ENCODE measurements at regions of chr4 and their contacts with region 1.

Region 1: DNA sequence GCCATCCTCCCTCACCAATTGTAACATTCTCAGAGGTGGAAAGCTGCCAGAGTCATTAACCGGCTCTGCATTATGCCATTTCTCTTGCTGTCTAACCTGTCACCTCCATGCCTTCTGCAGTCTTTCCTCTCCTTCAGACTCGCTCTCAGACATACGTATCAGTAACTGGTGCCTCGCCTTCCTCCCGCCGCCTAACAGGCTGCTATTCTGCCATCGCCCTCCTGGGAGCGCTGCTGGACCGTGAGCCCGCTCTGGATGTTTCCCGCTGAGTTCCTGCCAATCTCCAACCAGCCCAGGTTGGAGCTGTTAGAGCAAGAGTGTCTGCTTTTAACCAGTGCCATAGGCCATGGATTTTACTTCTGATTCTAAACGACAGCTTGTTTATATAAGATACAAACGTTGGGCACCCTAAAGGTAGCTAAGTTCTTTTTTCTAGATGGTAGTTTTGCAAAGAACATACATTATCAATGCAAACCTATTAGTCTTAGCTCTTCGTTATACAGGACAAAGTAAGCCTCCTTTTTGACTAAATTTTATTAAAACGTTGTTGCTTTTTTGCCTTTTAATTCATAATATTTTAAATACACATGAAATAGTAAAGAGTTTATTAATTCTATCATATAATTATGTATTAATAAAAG is 59.5 kb upstream of the NEIL3 start:
- DNase-seq: peak; percentile 77
- H3K4me3 Mint-ChIP-seq: no peak overlapping the region
- H3K27ac Mint-ChIP-seq: no peak overlapping the region
- H3K4me1 Mint-ChIP-seq: peaks cover 9% of the 10 kb centered on the region
- H3K27me3 Mint-ChIP-seq: peaks cover 8% of the 10 kb centered on the region

Region 2: GRCh38 chr4:176377780-176378179 is 872.4 kb before region 1 on chr4:
- CTCF ChIA-PET with region 1: no interaction called
- intact Hi-C with region 1: loop called (anchors 5 kb)
- DNase-seq: no peak
- H3K4me3 Mint-ChIP-seq: no peak overlapping the region
- H3K27ac Mint-ChIP-seq: no peak overlapping the region
- H3K4me1 Mint-ChIP-seq: no peaks in the 10 kb centered on the region
- H3K27me3 Mint-ChIP-seq: peaks cover 3% of the 10 kb centered on the region

Region 3: GRCh38 chr4:177118596-177118995 is 131.6 kb before region 1 on chr4:
- CTCF ChIA-PET with region 1: no interaction called
- intact Hi-C with region 1: no loop called
- DNase-seq: no peak
- H3K4me3 Mint-ChIP-seq: no peak overlapping the region
- H3K27ac Mint-ChIP-seq: no peak overlapping the region
- H3K4me1 Mint-ChIP-seq: no peaks in the 10 kb centered on the region
- H3K27me3 Mint-ChIP-seq: peaks cover 5% of the 10 kb centered on the region

Region 4: GRCh38 chr4:177309522-177310371 is 59.6 kb after region 1 on chr4 and contains the start of gene NEIL3:
- CTCF ChIA-PET with region 1: interaction called, 9 read pairs
- intact Hi-C with region 1: loop called (anchors 1 kb)
- DNase-seq: peak; percentile 98
- H3K4me3 Mint-ChIP-seq: peak within 1 kb of the TSS; percentile 91
- H3K27ac Mint-ChIP-seq: peak within 1 kb of the TSS; percentile 88
- H3K4me1 Mint-ChIP-seq: peaks cover 21% of the 10 kb centered on the region
- H3K27me3 Mint-ChIP-seq: no peaks in the 10 kb centered on the region
- total RNA-seq, gene NEIL3: 21.9 to 22.7 TPM

Region 5: DNA sequence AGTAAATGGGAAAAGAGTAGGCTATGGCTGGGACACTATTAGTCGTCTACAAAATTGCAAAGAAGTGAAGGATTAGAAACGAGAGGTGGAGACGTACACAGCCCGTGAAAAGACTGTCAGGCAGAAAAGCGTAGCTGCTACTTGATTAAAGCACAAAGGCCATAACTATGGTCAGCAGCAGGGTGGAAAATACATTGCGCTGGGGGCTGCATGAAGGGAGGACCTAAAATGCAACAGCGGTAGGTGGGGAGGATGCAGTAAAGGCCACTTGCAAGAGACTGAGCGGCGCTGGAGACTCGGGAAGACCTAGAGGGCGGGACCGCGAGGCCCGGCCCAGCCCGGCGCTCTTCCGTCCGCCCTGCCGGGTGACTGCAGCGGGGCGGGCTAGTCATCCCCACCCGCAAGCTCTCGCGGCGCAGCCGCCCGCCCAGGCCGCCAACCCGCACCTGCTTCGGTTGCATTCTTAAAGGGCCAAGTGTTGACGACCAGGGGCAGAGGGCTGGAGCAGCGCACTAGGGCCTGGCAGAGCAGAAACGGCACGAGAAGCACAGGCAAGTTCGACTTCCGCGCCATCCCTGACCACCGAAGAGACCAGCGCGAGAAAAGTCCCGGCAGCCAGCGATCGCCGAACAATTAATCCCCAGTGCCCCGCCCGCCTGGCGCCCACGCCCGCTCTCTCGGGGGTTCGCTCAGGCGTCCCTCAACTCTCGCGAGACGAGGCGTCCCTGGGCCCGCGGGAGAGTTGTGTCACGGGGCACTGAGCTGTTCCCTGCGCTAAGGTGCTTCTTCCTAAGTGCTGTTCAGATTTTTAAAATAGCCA is 191.8 kb after region 1 on chr4 and contains the start of gene AGA:
- CTCF ChIA-PET with region 1: interaction called, 5 read pairs
- intact Hi-C with region 1: loop called (anchors 1 kb)
- DNase-seq: peak; percentile 98
- H3K4me3 Mint-ChIP-seq: peak within 1 kb of the TSS; percentile 93
- H3K27ac Mint-ChIP-seq: peak within 1 kb of the TSS; percentile 96
- H3K4me1 Mint-ChIP-seq: peaks cover 25% of the 10 kb centered on the region
- H3K27me3 Mint-ChIP-seq: no peaks in the 10 kb centered on the region
- total RNA-seq, gene AGA: 14.4 to 18.0 TPM

Region 6: DNA sequence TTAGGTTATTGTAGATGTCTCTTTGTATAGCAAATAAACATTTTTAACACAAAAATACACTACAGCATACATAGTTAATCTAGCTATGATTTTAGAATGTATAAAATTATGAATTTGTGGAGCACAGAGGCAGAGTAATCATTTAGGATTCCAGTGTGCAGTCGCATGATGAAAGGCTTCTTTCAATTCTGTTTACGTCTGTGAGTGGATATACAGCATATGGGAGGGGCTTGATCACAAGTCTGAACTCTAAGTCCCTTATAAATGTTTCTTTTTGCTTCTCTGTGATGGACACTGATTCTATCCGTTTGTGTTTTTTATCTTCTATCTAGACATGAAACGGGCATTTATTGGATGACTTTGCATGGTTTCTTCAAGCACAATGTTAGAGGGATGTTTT is 1431.7 kb after region 1 on chr4:
- CTCF ChIA-PET with region 1: no interaction called
- intact Hi-C with region 1: loop called (anchors 10 kb)
- DNase-seq: no peak
- H3K4me3 Mint-ChIP-seq: no peak overlapping the region
- H3K27ac Mint-ChIP-seq: no peak overlapping the region
- H3K4me1 Mint-ChIP-seq: no peaks in the 10 kb centered on the region
- H3K27me3 Mint-ChIP-seq: no peaks in the 10 kb centered on the region